T-cell (primary cell): ENCODE measurements at regions of chr11 and their contacts with region 1.

Region 1: DNA sequence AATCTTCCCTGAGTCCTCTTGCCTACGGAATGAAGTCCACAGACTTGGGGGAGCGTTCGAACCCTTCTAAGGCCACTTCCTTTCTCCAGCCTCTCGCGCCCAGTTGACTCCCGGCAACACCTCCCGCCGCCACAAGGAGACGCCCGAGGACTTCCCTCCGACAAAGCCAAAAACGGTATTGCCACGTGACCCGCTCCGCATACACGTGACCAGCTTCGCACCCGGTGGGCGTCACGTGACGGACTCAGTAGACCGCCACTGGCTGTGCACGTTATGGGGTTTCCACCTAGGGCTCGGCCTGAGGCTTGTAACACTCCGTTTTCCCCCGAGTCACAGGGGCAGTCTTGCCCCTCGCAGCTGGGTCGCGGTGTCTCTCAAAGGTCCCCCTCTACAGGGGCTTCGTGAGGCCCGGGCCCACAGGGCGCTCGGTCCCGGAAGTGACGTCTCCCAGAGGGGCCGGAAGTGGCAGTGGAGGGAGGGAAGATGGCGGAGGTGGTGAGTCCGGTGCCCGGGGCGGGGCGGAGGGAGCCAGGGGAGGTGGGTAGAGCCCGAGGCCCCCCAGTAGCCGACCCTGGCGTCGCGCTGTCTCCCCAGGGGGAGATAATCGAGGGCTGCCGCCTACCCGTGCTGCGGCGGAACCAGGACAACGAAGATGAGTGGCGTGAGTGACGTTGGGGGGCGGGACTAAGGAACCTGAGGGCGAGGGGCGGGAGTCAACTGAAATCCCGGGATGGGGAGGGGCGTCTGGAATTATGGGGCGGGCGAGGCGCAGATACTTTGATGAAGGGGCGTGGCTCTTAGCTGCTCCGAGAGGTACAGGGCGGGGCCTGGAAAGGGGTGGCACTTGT is at the start of gene KAT5:
- DNase-seq: peak; percentile 96 to 99 (median 97)
- ATAC-seq: peak; percentile 87 to 88 (median 88)
- H3K4me3 ChIP-seq: peak within 1 kb of the TSS; percentile 87
- H3K4me3 Mint-ChIP-seq: peak within 1 kb of the TSS; percentile 88 to 92 (median 91)
- H3K27ac ChIP-seq: peak within 1 kb of the TSS; percentile 97
- H3K27ac Mint-ChIP-seq: peak within 1 kb of the TSS; percentile 98 to 99
- H3K4me1 ChIP-seq: peaks cover 7 to 27% of the 10 kb centered on the region in 2 experiments
- H3K4me1 Mint-ChIP-seq: peaks cover 25 to 27% (median 26%) of the 10 kb centered on the region in 3 donors
- H3K27me3 ChIP-seq: peaks cover 0 to 6% of the 10 kb centered on the region in 2 experiments
- H3K27me3 Mint-ChIP-seq: no peaks in the 10 kb centered on the region
- total RNA-seq, gene KAT5: 99.9 to 111 (median 104) TPM

Region 2: DNA sequence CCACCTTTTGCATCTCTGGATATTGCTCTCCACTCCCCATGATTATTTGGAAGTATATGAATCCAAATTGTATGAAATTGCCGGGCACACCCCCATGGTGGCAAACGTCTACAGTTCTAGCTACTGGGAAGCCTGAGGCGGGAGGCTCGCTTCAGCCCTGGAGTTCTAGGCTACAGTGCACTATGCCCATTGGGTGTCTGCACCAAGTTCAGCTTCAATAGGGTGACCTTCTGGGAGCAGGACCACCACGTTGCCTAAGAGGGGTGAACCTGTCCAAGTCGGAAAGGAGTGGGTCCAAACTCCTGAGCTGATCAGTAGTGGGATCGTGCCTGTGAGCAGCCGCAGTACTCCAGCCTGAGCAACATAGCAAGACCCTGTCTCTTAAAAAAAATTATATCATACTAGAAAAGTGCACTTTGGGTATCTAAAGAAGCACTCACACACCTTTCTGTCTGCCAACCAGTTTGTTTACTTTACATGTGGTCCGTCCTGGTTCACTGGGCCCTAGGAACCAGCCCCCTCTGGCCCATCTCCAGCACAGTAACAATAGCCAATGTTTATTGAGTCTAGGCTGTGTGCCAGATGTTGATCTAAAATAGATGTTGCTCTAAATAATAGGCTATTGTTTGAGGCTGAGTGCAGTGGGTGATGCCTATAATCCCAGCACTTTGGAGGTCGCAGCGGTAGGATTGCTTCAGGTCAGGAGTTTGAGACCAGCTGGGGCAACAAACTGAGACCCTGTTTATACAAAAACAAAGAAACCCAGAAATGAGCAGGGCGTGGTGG is 16.4 kb before region 1 on chr11:
- CTCF ChIA-PET with region 1: no interaction called
- POLR2A ChIA-PET with region 1: no interaction called
- DNase-seq: no peak
- ATAC-seq: no peak
- H3K4me3 ChIP-seq: no peak overlapping the region
- H3K4me3 Mint-ChIP-seq: no peak overlapping the region
- H3K27ac ChIP-seq: no peak overlapping the region
- H3K27ac Mint-ChIP-seq: no peak overlapping the region
- H3K4me1 ChIP-seq: no peaks in the 10 kb centered on the region
- H3K4me1 Mint-ChIP-seq: no peaks in the 10 kb centered on the region
- H3K27me3 ChIP-seq: no peaks in the 10 kb centered on the region
- H3K27me3 Mint-ChIP-seq: peaks cover 3% of the 10 kb centered on the region in 2 donors

Region 3: GRCh38 chr11:65726660-65727059 is 14.7 kb after region 1 on chr11:
- CTCF ChIA-PET with region 1: interaction called, 3 to 10 read pairs
- POLR2A ChIA-PET with region 1: no interaction called
- DNase-seq: no peak
- ATAC-seq: no peak
- H3K4me3 ChIP-seq: no peak overlapping the region
- H3K4me3 Mint-ChIP-seq: no peak overlapping the region
- H3K27ac ChIP-seq: no peak overlapping the region
- H3K27ac Mint-ChIP-seq: no peak overlapping the region
- H3K4me1 ChIP-seq: no peaks in the 10 kb centered on the region
- H3K4me1 Mint-ChIP-seq: peaks cover 0 to 3% (median 0%) of the 10 kb centered on the region in 3 donors
- H3K27me3 ChIP-seq: peaks cover 0 to 24% of the 10 kb centered on the region in 2 experiments
- H3K27me3 Mint-ChIP-seq: peaks cover 3 to 8% of the 10 kb centered on the region in 2 donors

Region 4: DNA sequence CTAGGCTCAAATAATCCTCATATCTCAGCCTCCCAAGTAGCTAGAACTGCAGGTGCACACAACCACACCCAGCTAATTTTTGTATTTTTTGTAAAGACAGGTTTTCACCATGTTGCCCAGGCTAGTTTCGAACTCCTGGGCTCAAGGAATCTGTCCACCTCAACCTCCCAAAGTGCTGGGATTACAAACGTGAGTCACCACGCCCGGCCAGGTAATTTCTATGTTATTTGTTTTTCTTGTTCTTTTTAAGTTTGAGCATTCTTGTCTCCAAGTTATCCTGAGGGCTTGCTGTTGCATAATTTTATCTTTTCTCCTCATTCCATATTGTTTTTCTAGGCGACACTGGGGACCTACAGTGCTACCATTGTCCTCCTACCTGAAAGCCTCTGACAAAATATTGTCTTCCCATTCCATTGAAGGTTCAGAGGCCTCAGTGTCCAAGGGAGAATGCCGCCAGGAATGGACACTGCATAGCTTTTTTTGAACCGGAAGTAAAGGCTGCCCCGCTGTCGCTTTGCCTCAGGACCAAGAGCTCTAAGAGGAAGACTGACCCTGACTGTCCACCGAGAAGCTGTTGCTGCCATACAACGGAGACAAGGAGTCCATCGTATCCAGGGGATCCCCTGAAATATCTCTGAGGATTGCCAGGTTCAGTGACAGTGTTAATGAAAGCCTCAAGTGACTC is 59.0 kb after region 1 on chr11:
- CTCF ChIA-PET with region 1: interaction called in 1 of 2 experiments, 14 read pairs
- POLR2A ChIA-PET with region 1: no interaction called
- DNase-seq: no peak
- ATAC-seq: no peak
- H3K4me3 ChIP-seq: no peak overlapping the region
- H3K4me3 Mint-ChIP-seq: no peak overlapping the region
- H3K27ac ChIP-seq: no peak overlapping the region
- H3K27ac Mint-ChIP-seq: no peak overlapping the region
- H3K4me1 ChIP-seq: no peaks in the 10 kb centered on the region
- H3K4me1 Mint-ChIP-seq: peaks cover 4 to 11% (median 5%) of the 10 kb centered on the region in 3 donors
- H3K27me3 ChIP-seq: no peaks in the 10 kb centered on the region
- H3K27me3 Mint-ChIP-seq: no peaks in the 10 kb centered on the region

Region 5: GRCh38 chr11:65779851-65780577 is 68.0 kb after region 1 on chr11:
- CTCF ChIA-PET with region 1: interaction called in 1 of 2 experiments, 11 read pairs
- POLR2A ChIA-PET with region 1: no interaction called
- DNase-seq: peak; percentile 50 to 84 (median 73)
- ATAC-seq: peak; percentile 59 to 66 (median 65)
- H3K4me3 ChIP-seq: peak overlapping the region; percentile 75 to 80
- H3K4me3 Mint-ChIP-seq: peak overlapping the region; percentile 78 to 84 (median 83)
- H3K27ac ChIP-seq: no peak overlapping the region
- H3K27ac Mint-ChIP-seq: peak overlapping the region in 1 of 2 donors; percentile 39
- H3K4me1 ChIP-seq: peaks cover 2 to 32% of the 10 kb centered on the region in 2 experiments
- H3K4me1 Mint-ChIP-seq: peaks cover 8 to 19% (median 16%) of the 10 kb centered on the region in 3 donors
- H3K27me3 ChIP-seq: peaks cover 0 to 13% of the 10 kb centered on the region in 2 experiments
- H3K27me3 Mint-ChIP-seq: peaks cover 0 to under 1% of the 10 kb centered on the region in 2 donors

Region 6: DNA sequence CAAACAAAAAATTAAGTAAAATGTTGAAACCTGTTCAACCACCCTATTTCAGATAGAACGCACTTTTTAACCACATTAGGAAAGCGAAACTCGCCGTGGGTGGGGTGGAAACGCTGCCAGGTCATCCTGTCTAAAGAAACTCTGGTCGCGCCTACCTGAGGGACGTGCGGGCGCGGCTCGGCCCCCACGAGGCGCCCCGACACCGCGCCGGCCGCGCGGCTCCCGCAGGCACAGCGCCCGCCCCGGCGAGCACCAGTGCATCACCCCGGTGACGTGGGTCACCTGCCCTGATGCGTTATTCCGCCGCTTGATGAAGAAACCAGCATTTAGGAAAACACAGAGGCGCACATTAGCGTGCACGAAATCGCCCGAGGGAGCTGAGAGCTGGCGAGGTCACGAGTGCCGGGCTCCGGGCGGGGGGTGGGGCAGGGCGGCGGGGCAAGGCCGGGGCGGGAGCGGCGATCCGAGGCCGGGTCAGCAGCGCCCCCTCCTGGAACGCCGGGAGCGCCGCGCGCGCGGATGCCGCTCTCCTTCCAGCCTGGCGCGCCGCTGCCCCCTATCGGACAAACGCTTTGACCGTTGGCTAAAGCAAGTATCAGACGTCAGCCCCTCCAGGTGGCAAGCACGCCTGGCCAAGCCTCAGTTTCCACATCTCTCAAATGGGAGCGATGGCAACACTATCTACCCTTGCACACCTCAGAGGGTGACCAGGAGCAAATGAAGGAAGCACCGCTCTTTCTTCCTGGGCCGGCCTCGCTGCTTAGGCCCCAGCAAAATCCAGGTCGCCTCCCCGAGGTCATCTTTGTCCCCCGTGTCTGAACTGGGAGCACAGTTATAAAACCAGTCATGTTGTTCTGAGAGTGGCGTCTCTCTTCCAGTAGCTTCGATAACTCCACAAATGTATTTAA is 106.1 kb after region 1 on chr11:
- CTCF ChIA-PET with region 1: interaction called in 1 of 2 experiments, 20 read pairs
- POLR2A ChIA-PET with region 1: no interaction called
- DNase-seq: peak; percentile 68 to 97 (median 89)
- ATAC-seq: peak; percentile 93 to 99 (median 96)
- H3K4me3 ChIP-seq: peak overlapping the region; percentile 46 to 71
- H3K4me3 Mint-ChIP-seq: peak overlapping the region; percentile 72 to 82 (median 81)
- H3K27ac ChIP-seq: peak overlapping the region; percentile 51
- H3K27ac Mint-ChIP-seq: peak overlapping the region; percentile 66 to 72
- H3K4me1 ChIP-seq: peaks cover 2 to 15% of the 10 kb centered on the region in 2 experiments
- H3K4me1 Mint-ChIP-seq: peaks cover 12 to 17% (median 16%) of the 10 kb centered on the region in 3 donors
- H3K27me3 ChIP-seq: peaks cover 0 to 9% of the 10 kb centered on the region in 2 experiments
- H3K27me3 Mint-ChIP-seq: no peaks in the 10 kb centered on the region